ENCODE measurements at regions of chr20 and their contacts with region 1.

Region 1: DNA sequence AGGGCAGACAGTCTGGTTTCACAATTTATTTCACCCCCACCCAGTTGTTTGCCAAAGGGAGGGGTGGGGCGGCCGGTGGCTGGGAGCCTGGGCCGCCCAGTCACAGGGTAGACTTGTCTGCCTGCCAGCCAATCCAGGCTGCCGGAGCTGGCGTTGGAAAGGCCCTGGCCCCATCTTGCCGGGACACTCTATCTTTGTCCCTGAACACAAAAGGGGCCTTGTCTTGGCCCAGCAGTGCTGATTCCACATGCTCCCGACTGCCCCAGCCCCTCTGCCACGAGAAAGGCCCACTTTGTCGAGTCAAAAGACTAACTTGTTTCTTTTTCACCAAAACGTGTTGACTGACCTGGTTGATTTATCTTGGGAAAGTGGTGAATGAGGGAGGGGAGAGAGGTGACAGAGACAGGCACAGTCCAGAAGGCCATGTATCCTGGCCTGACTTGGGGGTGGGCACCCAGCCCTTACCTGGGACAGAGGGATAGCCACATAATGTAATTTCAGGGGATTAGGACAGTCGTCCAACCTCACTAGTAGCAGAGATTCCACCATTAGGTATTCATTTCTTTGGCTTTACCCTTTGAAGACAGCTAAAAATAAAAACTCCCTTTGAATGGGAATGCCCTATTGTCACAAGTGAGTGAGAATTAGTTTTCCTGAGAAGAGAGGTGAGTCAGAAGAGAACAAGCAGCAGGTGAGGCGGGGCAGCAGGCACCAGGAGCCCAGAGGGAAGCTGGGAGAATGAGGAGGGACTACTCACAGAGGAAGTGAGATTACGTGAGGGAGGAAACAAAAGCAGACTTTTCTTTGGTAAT is 67.0 kb upstream of the SIRPA start:
- DNase-seq: peak; percentile 82 to 98 (median 92)

Region 2: DNA sequence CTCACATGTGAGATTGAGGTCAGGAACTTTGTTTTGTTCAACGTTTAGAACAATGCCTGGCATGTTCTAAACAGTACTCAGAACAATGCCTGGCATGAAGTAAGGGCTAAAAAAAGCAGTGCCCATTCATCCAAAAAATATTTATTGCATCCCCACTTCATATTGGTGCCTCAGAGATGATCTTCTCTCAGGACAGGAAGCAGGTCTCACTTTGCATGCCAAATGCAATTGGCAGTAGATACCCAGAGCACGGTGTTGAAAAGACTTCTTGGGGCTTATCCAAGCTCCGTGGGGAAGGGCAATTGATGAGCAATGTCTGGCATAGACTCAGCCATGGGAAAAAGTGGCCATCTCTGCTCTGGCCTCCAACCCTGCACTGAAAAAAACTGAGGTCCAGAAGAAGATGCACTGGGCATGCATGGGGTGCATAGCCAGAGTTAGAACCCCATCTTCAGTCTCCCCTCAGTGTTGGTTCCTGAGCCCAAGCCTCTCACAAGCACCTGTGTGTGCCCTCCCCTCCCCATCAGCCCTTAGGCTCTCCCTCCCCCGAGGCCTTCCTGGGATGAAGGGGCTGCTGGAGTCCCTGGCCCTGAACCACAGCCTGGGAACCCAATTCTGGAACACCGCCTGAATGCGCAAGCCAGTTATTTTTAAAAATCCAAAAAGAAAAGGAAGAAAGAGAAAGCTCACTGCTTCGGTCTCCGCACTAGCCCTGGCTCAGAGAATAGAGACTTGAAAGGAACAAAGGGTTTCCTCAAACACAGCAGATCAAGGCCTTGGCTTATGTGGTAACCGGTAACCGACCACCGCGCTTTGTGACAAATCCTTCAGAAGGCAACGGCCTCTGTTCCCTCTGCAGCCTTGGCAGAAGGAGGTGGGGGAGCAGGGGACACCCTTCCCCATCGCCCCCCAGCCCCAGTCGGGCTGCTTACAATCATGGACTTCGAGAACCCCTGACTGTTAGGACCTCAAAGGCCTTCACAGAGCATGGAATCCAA is 11.5 kb before region 1 on chr20:
- intact Hi-C with region 1: loop called (anchors 1 kb)
- DNase-seq: peak in 3 of 10 donors; percentile 32 to 88 (median 79)